A549 (cell line): ENCODE measurements at regions of chr15 and their contacts with region 1.

Region 1: GRCh38 chr15:59396679-59397078 is 24.0 kb upstream of the MYO1E start:
- DNase-seq: no peak
- ATAC-seq: peak in 1 of 2 experiments; percentile 56; a peak in 3 of 6 replicates
- H3K4me3 ChIP-seq: no peak overlapping the region
- H3K27ac ChIP-seq: peak overlapping the region; percentile 29 to 49; a peak in 5 of 6 replicates
- H3K4me1 ChIP-seq: peaks cover 14% of the 10 kb centered on the region
- CTCF ChIP-seq: no peak; the same call in 2 of the 3 replicates
- EP300 ChIP-seq: no peak
- POLR2A ChIP-seq: no peak
- RAD21 ChIP-seq: peak; percentile 30 to 34; a peak in 2 of 5 replicates

Region 2: DNA sequence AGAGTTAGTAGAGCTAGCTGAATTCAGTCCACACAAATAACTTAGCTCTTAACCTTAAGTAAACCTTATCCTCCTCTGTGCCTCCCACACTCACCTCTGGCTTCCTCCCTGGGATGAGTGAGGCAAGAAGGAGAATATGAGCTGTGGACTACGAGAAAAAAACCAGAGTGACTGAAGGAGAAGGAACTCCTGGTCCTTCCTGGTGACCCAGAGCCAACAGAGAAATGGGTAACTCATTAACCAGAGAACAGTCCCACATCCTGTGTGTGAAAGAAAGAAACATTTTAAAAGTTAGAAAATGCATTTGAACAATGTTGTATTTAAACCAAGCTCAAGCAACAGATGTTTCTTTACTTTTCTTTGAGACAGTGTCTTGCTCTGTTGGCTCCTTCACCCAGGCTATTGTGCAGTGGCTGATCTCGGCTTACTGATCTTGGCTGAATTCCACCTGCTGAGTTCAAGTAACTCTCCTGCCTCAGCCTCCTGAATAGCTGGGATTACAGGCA is 13.8 kb after region 1 on chr15:
- CTCF ChIA-PET with region 1: interaction called, 15 read pairs
- POLR2A ChIA-PET with region 1: no interaction called
- DNase-seq: peak; percentile 58 to 75
- ATAC-seq: peak; percentile 63 to 73; a peak in 5 of 6 replicates
- H3K4me3 ChIP-seq: no peak overlapping the region
- H3K27ac ChIP-seq: peak overlapping the region; percentile 73 to 84
- H3K4me1 ChIP-seq: peaks cover 44% of the 10 kb centered on the region
- CTCF ChIP-seq: no peak
- EP300 ChIP-seq: no peak; a peak in 1 of 5 replicates
- POLR2A ChIP-seq: no peak
- RAD21 ChIP-seq: no peak

Region 3: DNA sequence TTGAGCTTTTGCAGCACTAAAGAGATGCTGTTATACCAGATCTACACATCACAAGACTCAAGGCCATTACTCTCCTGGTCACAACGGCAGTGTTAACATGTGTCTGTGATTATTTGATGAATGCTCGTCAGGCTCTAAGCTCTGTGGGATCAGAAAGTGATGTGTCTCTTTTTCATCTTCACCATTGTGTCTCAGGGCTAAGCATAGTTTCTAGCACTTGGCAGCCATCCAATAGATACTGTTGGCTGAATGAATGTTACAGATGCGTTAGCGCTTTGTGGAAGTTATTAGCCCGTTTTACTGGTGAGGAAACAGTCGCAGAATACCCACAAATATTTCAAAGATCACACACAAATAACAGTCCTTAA is 40.1 kb after region 1 on chr15:
- CTCF ChIA-PET with region 1: no interaction called
- POLR2A ChIA-PET with region 1: no interaction called
- DNase-seq: no peak
- ATAC-seq: no peak
- H3K4me3 ChIP-seq: no peak overlapping the region
- H3K27ac ChIP-seq: no peak overlapping the region
- H3K4me1 ChIP-seq: peaks cover 11% of the 10 kb centered on the region; the same call in 2 of the 3 replicates
- CTCF ChIP-seq: no peak
- EP300 ChIP-seq: no peak
- POLR2A ChIP-seq: no peak
- RAD21 ChIP-seq: no peak